ENCODE measurements at regions of chr13 and their contacts with region 1.

Region 1: DNA sequence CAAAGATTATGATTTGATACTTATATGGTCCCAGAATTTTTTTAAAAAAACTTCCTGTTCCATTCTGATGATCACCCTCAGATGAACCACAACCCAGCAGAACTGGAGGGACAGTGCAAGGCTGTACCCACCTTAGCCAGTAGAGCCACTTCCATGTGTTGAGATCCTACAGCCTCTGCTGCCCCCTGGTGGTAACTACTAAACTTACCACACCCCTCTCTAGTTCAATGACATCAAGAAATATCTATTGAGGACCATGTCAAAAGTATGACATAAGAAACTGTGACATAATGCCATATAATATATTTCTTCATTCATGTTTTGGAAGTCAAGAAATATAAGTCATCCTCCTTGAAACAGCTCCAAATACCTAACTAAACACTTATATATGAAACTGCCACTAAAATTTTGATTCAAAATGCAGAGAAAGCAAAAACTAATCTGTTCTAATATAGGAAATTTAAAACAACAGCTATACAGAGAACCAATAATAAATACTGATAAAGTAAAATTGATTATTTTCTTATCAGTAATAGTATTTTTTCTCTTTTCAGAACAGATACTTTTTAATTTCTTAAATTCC is 412.6 kb downstream of the KCTD12 start:
- DNase-seq: peak; percentile 25 to 70 (median 61)
- ATAC-seq: peak; percentile 97
- H3K4me3 ChIP-seq: no peak overlapping the region
- H3K4me3 Mint-ChIP-seq: no peak overlapping the region
- H3K27ac ChIP-seq: no peak overlapping the region
- H3K27ac Mint-ChIP-seq: peak overlapping the region in 1 of 9 donors; percentile 21
- H3K4me1 ChIP-seq: no peaks in the 10 kb centered on the region
- H3K4me1 Mint-ChIP-seq: no peaks in the 10 kb centered on the region
- H3K27me3 ChIP-seq: no peaks in the 10 kb centered on the region
- H3K27me3 Mint-ChIP-seq: peaks cover 6 to 29% (median 7%) of the 10 kb centered on the region in 5 donors

Region 2: GRCh38 chr13:75372517-75372916 is 1101.1 kb before region 1 on chr13:
- CTCF ChIA-PET with region 1: interaction called, 3 read pairs
- POLR2A ChIA-PET with region 1: no interaction called
- intact Hi-C with region 1: loop called in 1 of 2 experiments (anchors 10 kb)
- DNase-seq: peak in 7 of 9 donors; percentile 15 to 51 (median 38)
- ATAC-seq: peak; percentile 86
- H3K4me3 ChIP-seq: no peak overlapping the region
- H3K4me3 Mint-ChIP-seq: no peak overlapping the region
- H3K27ac ChIP-seq: no peak overlapping the region
- H3K27ac Mint-ChIP-seq: no peak overlapping the region
- H3K4me1 ChIP-seq: no peaks in the 10 kb centered on the region
- H3K4me1 Mint-ChIP-seq: peaks cover 0 to 2% (median 0%) of the 10 kb centered on the region in 7 donors
- H3K27me3 ChIP-seq: no peaks in the 10 kb centered on the region
- H3K27me3 Mint-ChIP-seq: peaks cover 0 to 8% (median 0%) of the 10 kb centered on the region in 5 donors

Region 3: DNA sequence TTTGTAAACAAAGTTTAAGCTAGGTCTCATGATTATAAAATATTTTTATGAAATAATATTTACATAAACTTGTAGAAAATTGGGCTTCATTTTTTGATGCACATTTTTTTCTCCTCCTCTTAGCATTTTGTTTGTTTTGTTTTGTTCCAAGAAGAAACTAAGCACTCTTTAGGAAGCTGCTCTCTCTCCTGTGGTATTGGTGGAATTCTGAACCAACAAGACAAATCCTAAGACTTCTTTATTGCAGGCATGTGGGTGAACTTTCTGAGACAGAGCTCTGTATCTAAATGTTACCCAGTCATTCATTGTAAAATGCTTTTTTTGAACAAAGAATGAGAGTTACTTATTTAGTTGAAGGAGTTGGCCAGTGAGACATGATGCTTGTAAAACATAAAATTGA is 798.2 kb before region 1 on chr13:
- CTCF ChIA-PET with region 1: no interaction called
- POLR2A ChIA-PET with region 1: no interaction called
- intact Hi-C with region 1: loop called (anchors 1 to 5 kb)
- DNase-seq: no peak
- ATAC-seq: no peak
- H3K4me3 ChIP-seq: no peak overlapping the region
- H3K4me3 Mint-ChIP-seq: no peak overlapping the region
- H3K27ac ChIP-seq: no peak overlapping the region
- H3K27ac Mint-ChIP-seq: no peak overlapping the region
- H3K4me1 ChIP-seq: no peaks in the 10 kb centered on the region
- H3K4me1 Mint-ChIP-seq: no peaks in the 10 kb centered on the region
- H3K27me3 ChIP-seq: no peaks in the 10 kb centered on the region
- H3K27me3 Mint-ChIP-seq: no peaks in the 10 kb centered on the region

Region 4: DNA sequence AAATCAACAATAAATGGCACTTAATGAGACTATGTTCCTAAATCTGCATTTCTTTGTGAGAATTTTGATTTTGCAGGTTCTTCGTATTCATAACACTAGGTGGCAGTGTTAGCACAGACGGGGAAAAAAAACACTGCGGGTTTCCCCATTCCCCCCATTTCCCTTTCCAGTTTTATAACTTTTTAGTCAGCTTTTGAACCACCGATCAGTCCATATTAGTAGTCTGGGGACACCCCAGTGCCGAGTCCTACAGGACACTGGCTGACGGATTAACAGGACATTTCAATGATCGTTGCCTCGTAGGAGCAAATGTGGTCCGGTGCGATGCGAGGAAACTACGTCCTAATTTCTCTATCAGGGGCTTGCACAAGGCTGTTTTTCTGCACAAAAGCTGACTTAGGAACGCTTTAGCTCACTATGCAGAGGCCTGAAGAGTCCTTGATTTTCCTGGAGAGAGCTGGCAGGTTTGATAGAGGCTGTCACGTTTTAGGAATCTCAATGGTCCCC is 603.2 kb before region 1 on chr13:
- CTCF ChIA-PET with region 1: no interaction called
- POLR2A ChIA-PET with region 1: no interaction called
- intact Hi-C with region 1: loop called (anchors 1 kb)
- DNase-seq: peak in 6 of 9 donors; percentile 12 to 61 (median 38)
- ATAC-seq: peak; percentile 75
- H3K4me3 ChIP-seq: peak overlapping the region; percentile 50
- H3K4me3 Mint-ChIP-seq: peak overlapping the region; percentile 60 to 85 (median 80)
- H3K27ac ChIP-seq: peak overlapping the region; percentile 52
- H3K27ac Mint-ChIP-seq: peak overlapping the region; percentile 72 to 92 (median 86)
- H3K4me1 ChIP-seq: peaks cover 0 to 13% of the 10 kb centered on the region in 2 donors
- H3K4me1 Mint-ChIP-seq: peaks cover 4 to 29% (median 19%) of the 10 kb centered on the region in 7 donors
- H3K27me3 ChIP-seq: no peaks in the 10 kb centered on the region
- H3K27me3 Mint-ChIP-seq: peaks cover 0 to 13% (median 3%) of the 10 kb centered on the region in 5 donors

Region 5: GRCh38 chr13:77767413-77767812 is 1293.8 kb after region 1 on chr13:
- CTCF ChIA-PET with region 1: no interaction called
- POLR2A ChIA-PET with region 1: no interaction called
- intact Hi-C with region 1: no loop called
- DNase-seq: no peak
- ATAC-seq: peak; percentile 57
- H3K4me3 ChIP-seq: no peak overlapping the region
- H3K4me3 Mint-ChIP-seq: no peak overlapping the region
- H3K27ac ChIP-seq: no peak overlapping the region
- H3K27ac Mint-ChIP-seq: peak overlapping the region in 1 of 9 donors; percentile 21
- H3K4me1 ChIP-seq: no peaks in the 10 kb centered on the region
- H3K4me1 Mint-ChIP-seq: peaks cover 0 to 6% (median 0%) of the 10 kb centered on the region in 7 donors
- H3K27me3 ChIP-seq: no peaks in the 10 kb centered on the region
- H3K27me3 Mint-ChIP-seq: no peaks in the 10 kb centered on the region

Measured in naive thymus-derived CD4-positive, alpha-beta T cell (primary cell).